ENCODE measurements at regions of chr2 and their contacts with region 1.

Region 1: DNA sequence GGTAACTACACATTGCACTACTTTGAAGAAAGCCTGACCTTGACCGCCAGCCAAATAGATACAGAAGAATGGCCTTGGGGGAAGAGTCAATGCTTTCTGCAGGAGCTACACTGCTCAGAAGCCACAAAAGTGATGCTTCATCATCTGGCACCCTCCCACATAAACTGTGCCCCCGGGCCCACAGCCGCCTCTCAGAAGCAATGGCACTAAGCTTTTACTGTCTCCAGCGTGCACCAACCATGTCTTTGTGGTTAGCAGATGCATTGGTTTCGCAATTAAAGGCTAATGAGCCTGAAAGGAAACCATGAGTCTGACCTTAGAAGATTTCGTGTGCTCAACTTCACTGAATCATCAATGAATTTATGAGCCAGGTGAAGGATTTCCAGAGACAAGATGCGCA is 209.4 kb upstream of the TRIB2 start:
- DNase-seq: peak; percentile 88
- H3K4me3 Mint-ChIP-seq: peak overlapping the region; percentile 27
- H3K27ac Mint-ChIP-seq: peak overlapping the region; percentile 33
- H3K4me1 Mint-ChIP-seq: peaks cover 77% of the 10 kb centered on the region
- H3K27me3 Mint-ChIP-seq: no peaks in the 10 kb centered on the region

Region 2: DNA sequence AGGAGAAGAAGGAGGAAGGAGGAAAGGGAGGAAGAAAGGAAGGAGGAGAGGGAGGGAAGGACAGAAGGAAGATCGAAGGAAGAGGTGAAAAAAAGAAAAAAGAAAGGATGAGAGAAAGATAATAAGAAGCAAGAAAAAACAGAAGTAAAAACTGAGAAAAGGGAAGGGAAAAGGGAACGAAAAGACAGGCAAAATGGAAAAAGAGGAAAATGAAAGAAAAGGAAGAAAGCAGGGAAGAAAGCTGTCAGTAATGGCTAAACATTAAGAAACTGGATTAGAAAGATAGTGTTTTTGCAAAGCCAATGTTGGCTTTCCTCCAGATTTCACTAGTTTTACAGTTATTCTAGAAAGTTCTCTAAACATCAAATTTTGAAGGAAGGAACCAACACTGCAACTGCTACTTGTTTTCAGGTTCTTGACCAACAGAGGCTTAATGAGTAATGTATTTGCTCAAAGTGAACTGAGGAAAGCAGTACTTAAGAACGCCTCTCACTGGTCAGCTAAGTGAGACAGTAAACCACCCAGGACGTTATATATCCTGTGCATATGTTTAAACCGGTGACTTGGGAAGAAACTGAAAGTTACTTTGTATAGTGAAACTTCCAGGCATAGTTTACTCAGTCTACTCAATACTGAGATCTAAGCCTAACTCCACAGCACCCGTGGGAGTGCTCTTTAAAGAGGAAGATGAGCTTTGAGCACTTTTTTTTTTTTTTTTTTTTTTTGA is 76.7 kb before region 1 on chr2:
- CTCF ChIA-PET with region 1: no interaction called
- POLR2A ChIA-PET with region 1: no interaction called
- intact Hi-C with region 1: loop called (anchors 2 kb)
- DNase-seq: peak; percentile 53
- H3K4me3 Mint-ChIP-seq: peak overlapping the region; percentile 33
- H3K27ac Mint-ChIP-seq: peak overlapping the region; percentile 74
- H3K4me1 Mint-ChIP-seq: peaks cover 14% of the 10 kb centered on the region
- H3K27me3 Mint-ChIP-seq: no peaks in the 10 kb centered on the region

Region 3: GRCh38 chr2:12493031-12493513 is 14.2 kb before region 1 on chr2:
- CTCF ChIA-PET with region 1: interaction called, 6 read pairs
- POLR2A ChIA-PET with region 1: interaction called, 3 read pairs
- intact Hi-C with region 1: loop called (anchors 2 kb)
- DNase-seq: peak; percentile 82
- H3K4me3 Mint-ChIP-seq: peak overlapping the region; percentile 3
- H3K27ac Mint-ChIP-seq: peak overlapping the region; percentile 86
- H3K4me1 Mint-ChIP-seq: peaks cover 69% of the 10 kb centered on the region
- H3K27me3 Mint-ChIP-seq: no peaks in the 10 kb centered on the region

Region 4: DNA sequence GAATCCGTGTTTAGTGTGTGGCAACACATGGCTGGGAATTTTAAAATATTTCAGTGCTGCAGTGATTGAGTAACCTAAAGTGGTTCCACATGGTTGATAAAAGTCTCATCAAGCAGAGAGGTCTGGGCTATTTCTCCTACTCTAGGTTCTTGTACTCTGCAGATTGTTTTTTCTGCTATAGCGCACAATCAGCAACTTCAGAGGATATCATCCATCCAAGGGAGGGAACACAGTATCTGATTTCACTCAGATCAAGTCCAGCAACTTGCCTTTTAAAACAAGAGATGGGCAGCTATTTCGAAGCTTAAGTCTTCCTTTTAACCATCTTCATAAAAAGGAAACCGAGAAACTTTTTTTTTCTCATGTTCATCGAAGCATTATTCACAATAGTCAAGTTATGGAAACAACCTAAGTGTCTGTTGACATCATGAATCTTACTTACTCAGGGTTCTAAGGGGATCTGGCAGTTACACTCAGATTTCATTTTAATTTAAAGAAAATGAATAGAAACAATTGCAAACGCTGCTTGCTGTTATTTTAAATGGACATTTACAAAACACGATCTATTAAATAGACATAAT is 36.8 kb after region 1 on chr2:
- CTCF ChIA-PET with region 1: no interaction called
- POLR2A ChIA-PET with region 1: no interaction called
- intact Hi-C with region 1: no loop called
- DNase-seq: no peak
- H3K4me3 Mint-ChIP-seq: no peak overlapping the region
- H3K27ac Mint-ChIP-seq: no peak overlapping the region
- H3K4me1 Mint-ChIP-seq: peaks cover 5% of the 10 kb centered on the region
- H3K27me3 Mint-ChIP-seq: no peaks in the 10 kb centered on the region